Mammary epithelial cell (primary cell): ENCODE measurements at regions of chr2 and their contacts with region 1.

Region 1: GRCh38 chr2:10302479-10303180 is at the start of gene HPCAL1:
- DNase-seq: peak; percentile 80
- H3K4me3 ChIP-seq: peak within 1 kb of the TSS; percentile 58 to 89 (median 87)
- H3K27ac ChIP-seq: no peak within 1 kb of the TSS
- H3K4me1 ChIP-seq: peaks cover 19% of the 10 kb centered on the region
- H3K27me3 ChIP-seq: no peaks in the 10 kb centered on the region
- CTCF ChIP-seq: peak; percentile 28 to 65
- total RNA-seq, gene HPCAL1: 26.3 to 82.8 TPM

Region 2: DNA sequence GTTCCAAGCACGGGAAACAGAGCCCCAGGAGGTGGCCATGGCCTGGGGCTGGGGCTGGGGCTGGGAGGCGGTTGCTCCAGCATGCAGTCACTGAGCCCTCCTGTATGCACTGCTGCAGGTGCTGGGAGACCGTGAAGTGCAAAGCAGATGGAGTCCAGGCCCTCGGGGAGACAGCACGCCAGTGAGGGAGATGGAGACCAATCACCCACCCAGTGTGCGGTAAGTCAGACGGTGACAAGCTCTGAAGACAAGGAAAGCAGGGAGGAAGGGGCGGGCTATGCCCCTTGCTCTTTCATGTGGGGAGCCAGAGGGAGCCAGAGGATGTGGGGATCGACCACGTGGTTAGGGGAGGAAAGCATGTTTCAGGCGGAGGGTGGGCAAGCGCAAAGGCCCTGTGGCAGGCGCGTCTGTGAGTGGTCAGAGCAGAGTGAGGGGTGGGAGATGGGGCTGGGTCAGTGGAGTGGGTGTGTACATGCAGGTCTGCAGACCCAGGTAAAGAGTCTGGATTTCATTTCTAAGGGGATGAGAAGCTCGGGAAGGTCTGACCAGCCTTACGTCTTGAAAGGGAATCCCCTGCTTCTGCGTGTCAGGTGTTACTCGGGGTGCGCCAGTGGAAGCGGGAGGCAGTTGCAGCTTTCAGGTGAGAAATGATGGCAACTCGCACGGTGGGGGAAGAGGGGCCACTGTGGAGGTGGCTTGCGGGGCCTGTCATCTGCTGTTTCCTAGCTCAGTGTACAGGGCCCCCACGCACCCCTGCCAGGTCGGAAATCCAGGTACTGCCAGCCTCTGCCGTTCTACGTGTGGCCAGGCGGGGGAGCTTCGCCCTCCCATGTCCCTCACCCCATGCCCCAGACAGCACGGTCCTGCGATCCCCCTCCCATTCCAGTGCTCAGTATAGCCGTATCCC is 160.6 kb before region 1 on chr2:
- CTCF ChIA-PET with region 1: interaction called, 4 read pairs
- dilution Hi-C with region 1: no loop called
- in situ Hi-C with region 1: no loop called
- intact Hi-C with region 1: loop called (anchors 2 kb)
- DNase-seq: no peak
- H3K4me3 ChIP-seq: no peak overlapping the region
- H3K27ac ChIP-seq: no peak overlapping the region
- H3K4me1 ChIP-seq: peaks cover 10% of the 10 kb centered on the region
- H3K27me3 ChIP-seq: no peaks in the 10 kb centered on the region
- CTCF ChIP-seq: peak; percentile 49 to 70

Region 3: GRCh38 chr2:10204326-10205161 is 98.1 kb before region 1 on chr2:
- CTCF ChIA-PET with region 1: no interaction called
- dilution Hi-C with region 1: no loop called
- in situ Hi-C with region 1: no loop called
- intact Hi-C with region 1: no loop called
- DNase-seq: no peak
- H3K4me3 ChIP-seq: no peak overlapping the region
- H3K27ac ChIP-seq: no peak overlapping the region
- H3K4me1 ChIP-seq: peaks cover 13% of the 10 kb centered on the region
- H3K27me3 ChIP-seq: no peaks in the 10 kb centered on the region
- CTCF ChIP-seq: no peak

Region 4: GRCh38 chr2:10266133-10266620 is 36.5 kb before region 1 on chr2:
- CTCF ChIA-PET with region 1: interaction called, 41 read pairs
- dilution Hi-C with region 1: no loop called
- in situ Hi-C with region 1: no loop called
- intact Hi-C with region 1: no loop called
- DNase-seq: no peak
- H3K4me3 ChIP-seq: no peak overlapping the region
- H3K27ac ChIP-seq: no peak overlapping the region
- H3K4me1 ChIP-seq: peaks cover 9% of the 10 kb centered on the region
- H3K27me3 ChIP-seq: no peaks in the 10 kb centered on the region
- CTCF ChIP-seq: no peak

Region 5: GRCh38 chr2:10497797-10498251 is 195.2 kb after region 1 on chr2:
- CTCF ChIA-PET with region 1: no interaction called
- dilution Hi-C with region 1: no loop called
- in situ Hi-C with region 1: no loop called
- intact Hi-C with region 1: no loop called
- DNase-seq: peak; percentile 96
- H3K4me3 ChIP-seq: no peak overlapping the region
- H3K27ac ChIP-seq: peak overlapping the region; percentile 43
- H3K4me1 ChIP-seq: peaks cover 43% of the 10 kb centered on the region
- H3K27me3 ChIP-seq: peaks cover 3% of the 10 kb centered on the region
- CTCF ChIP-seq: no peak